ENCODE measurements at regions of chr17 and their contacts with region 1.

Region 1: DNA sequence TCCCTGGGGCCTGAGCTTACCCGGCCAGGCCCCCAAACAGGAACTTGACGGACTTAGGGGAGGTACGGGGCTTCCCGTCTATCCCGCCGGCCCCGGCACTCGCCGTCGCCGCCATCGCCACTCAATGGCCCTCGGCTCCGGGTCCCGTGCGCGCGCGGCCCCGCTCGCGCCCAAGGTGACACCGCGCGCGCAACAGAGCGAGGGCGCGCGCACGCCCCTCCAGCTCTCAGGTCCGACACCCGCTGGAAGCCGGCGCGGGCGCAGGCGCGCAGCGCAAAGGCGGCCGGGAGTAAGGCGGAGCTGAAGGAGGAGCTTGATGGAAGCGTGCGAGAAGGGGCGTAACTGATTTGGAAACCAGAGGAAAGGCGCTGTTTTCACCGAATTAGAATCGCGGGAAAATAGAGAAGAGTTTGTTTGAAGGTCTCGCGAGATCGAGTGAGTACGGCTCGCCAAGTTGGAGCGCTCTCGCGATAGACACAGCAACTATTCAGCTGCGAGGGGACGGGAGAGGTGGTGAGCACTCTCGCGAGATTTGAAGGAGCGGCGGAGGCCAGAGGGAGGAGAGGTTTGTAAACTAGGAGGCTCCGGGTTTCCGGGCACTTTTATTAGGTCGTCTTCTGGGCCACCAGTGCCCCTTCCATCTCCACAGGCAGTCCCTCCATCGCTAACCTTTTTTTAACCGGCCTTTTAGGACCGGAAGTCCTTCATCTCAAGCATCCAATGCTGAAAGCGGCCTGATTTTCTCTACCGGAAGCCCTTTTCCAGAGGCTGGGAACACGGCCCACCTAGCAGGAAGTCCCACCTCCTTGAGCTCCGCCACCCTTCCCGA is at the starts of genes RNF167 and SLC25A11:
- DNase-seq: peak; percentile 98
- H3K4me3 ChIP-seq: peak within 1 kb of the TSS; percentile 57 to 95 (median 78)
- H3K27ac ChIP-seq: peak within 1 kb of the TSS; percentile 93 to 99 (median 97)
- H3K4me1 ChIP-seq: peaks cover 45 to 80% (median 65%) of the 10 kb centered on the region in 6 donors
- H3K27me3 ChIP-seq: no peaks in the 10 kb centered on the region
- CTCF ChIP-seq: peak in 8 of 11 experiments; percentile 12 to 68 (median 40)
- POLR2A ChIP-seq: peak in 2 of 3 donors; percentile 32 to 58
- total RNA-seq, gene RNF167: 57.6 to 109 (median 78.6) TPM
- total RNA-seq, gene SLC25A11: 37.2 to 61.0 (median 42.9) TPM

Region 2: DNA sequence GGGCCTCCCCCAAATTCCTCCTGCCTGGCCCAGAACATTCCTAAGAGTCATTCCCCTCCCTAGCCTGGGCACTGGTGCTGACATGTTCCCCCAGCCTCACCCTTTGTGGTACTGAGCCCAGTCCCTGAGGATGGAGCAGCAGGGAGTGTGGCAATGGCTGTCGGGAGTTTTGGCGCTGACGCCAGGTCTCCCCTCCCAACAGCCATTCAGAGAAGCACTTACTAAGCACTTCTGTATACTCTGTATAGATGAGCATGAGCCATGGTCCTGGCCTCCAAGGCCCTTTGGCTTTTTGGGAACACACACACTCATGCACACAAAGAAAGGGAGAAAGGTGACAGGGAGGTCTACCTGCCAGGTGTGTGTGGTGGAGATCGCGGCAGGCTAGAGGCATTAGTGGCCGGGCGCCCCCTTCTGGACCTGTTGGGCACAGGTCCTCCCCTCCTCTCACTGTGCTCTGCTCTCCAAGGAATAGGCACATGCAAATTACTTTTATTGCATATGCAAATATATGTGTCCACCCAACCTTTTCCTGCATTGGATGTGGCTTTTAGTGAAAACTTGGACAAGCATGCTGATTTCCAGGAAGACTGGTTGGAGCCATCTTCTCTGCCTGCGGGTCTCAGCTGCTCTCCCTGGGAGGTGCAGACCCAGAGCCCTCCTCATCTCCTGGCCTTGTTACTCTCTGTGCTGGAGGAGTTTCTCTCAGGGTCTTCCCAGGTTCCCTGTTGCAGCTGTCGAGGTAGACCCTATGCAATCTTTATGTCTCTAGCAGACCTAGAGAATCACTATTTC is 58.1 kb before region 1 on chr17:
- intact Hi-C with region 1: no loop called
- DNase-seq: peak; percentile 90
- H3K4me3 ChIP-seq: no peak overlapping the region
- H3K27ac ChIP-seq: no peak overlapping the region
- H3K4me1 ChIP-seq: peaks cover 0 to 29% (median 8%) of the 10 kb centered on the region in 6 donors
- H3K27me3 ChIP-seq: no peaks in the 10 kb centered on the region
- CTCF ChIP-seq: peak; percentile 66 to 90 (median 79)
- POLR2A ChIP-seq: no peak

Region 3: DNA sequence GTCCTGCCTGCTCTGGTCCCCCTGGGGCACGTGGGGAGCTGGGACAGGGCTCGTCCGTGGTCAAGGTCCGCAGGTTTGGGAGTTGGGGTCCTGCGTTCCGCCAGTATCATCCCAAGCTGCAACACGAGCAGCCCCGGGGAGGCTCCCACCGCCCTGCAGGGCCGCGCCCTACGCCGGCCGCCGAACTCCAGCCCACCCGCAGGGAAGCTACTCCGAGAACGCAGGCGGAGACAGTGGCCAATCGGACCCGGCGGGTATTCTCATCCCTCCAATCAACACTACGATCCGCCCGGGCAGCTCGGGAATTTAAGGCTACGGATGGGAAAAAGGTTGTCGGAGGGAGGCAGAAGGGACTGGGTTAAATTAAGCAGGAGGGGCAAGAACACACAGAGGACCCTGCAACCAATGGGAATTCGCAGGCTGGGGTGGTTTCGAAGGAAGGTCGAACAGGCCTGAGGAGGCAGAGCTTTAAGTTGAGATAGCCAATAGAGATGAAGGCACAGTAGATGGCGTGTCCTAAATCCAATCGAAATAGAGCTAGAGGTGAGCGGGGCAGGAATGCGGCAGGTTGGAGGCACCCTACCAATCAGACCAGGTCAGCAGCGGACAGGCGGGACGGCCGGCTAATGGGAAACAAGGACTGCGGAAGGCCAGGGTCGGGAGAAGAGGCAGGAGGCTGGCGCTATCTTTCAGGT is 27.0 kb after region 1 on chr17:
- intact Hi-C with region 1: loop called (anchors 2 kb)
- DNase-seq: peak; percentile 98
- H3K4me3 ChIP-seq: peak overlapping the region; percentile 72 to 90 (median 84)
- H3K27ac ChIP-seq: peak overlapping the region; percentile 93 to 95 (median 94)
- H3K4me1 ChIP-seq: peaks cover 15 to 71% (median 35%) of the 10 kb centered on the region in 6 donors
- H3K27me3 ChIP-seq: no peaks in the 10 kb centered on the region
- CTCF ChIP-seq: peak in 1 of 11 experiments; percentile 26
- POLR2A ChIP-seq: no peak

Region 4: GRCh38 chr17:4997302-4998026 is 57.5 kb after region 1 on chr17 and contains the starts of genes INCA1 and KIF1C:
- intact Hi-C with region 1: loop called (anchors 10 kb)
- DNase-seq: peak; percentile 99
- H3K4me3 ChIP-seq: peak within 1 kb of the TSS; percentile 85 to 97 (median 88)
- H3K27ac ChIP-seq: peak within 1 kb of the TSS; percentile 69 to 95 (median 90)
- H3K4me1 ChIP-seq: peaks cover 18 to 51% (median 32%) of the 10 kb centered on the region in 6 donors
- H3K27me3 ChIP-seq: no peaks in the 10 kb centered on the region
- CTCF ChIP-seq: peak in 9 of 11 experiments; percentile 19 to 65 (median 43)
- POLR2A ChIP-seq: peak in 2 of 3 donors; percentile 28 to 37
- total RNA-seq, gene INCA1: 1.1 to 2.1 (median 1.6) TPM
- total RNA-seq, gene KIF1C: 47.5 to 141 (median 79.7) TPM

Measured in spleen (tissue), 13 donors.